CD8-positive, alpha-beta memory T cell (primary cell): ENCODE measurements at regions of chr12 and their contacts with region 1.

Region 1: GRCh38 chr12:69243099-69244084 is 4.0 kb downstream of the CPSF6 start:
- DNase-seq: no peak
- H3K4me3 ChIP-seq: peak overlapping the region; percentile 9
- H3K4me3 Mint-ChIP-seq: peak overlapping the region; percentile 2 to 75 (median 37)
- H3K27ac ChIP-seq: no peak overlapping the region
- H3K27ac Mint-ChIP-seq: peak overlapping the region in 7 of 8 donors; percentile 8 to 92 (median 35)
- H3K4me1 ChIP-seq: peaks cover 70% of the 10 kb centered on the region
- H3K4me1 Mint-ChIP-seq: peaks cover 72 to 88% (median 84%) of the 10 kb centered on the region in 3 donors
- H3K27me3 ChIP-seq: no peaks in the 10 kb centered on the region
- H3K27me3 Mint-ChIP-seq: no peaks in the 10 kb centered on the region

Region 2: DNA sequence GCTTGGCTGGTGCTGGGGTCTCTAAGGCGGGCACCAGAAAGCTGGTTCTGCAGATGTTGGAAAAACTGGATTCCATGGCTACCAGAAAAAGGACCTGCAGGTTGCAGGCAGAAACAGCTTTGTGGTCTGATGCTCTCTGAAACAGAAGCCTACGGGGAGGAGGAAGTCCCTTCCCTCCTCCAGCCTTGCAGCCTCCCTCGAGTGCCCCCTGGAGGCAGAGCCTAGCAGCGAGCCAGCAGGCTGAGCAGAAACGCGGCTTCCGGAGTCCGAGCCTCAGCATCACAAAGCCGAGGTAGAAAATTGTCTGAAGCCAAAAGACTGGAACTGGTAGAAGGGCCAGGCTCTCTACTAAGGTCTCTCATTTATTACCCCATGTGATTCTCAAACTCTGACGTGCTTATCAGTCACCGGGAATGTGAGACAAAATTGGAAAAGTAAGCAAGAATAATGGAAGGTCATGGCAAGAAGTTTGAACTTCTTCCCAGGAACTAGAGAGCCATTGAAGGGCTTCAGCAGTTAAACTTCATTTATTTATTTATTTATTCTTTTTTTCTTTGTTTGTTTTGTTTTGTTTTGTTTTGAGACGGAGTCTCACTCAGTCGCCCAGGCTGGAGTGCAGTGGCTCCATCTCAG is 86.3 kb before region 1 on chr12:
- CTCF ChIA-PET with region 1: interaction called, 28 read pairs
- POLR2A ChIA-PET with region 1: interaction called, 3 read pairs
- DNase-seq: peak; percentile 76 to 90 (median 82)
- H3K4me3 ChIP-seq: no peak overlapping the region
- H3K4me3 Mint-ChIP-seq: peak overlapping the region; percentile 46 to 84 (median 67)
- H3K27ac ChIP-seq: no peak overlapping the region
- H3K27ac Mint-ChIP-seq: peak overlapping the region in 5 of 8 donors; percentile 19 to 91 (median 33)
- H3K4me1 ChIP-seq: peaks cover 6% of the 10 kb centered on the region
- H3K4me1 Mint-ChIP-seq: peaks cover 12 to 29% (median 21%) of the 10 kb centered on the region in 3 donors
- H3K27me3 ChIP-seq: no peaks in the 10 kb centered on the region
- H3K27me3 Mint-ChIP-seq: peaks cover 0 to 3% of the 10 kb centered on the region in 2 donors